WTC11 (cell line): ENCODE measurements at regions of chr10 and their contacts with region 1.

Region 1: DNA sequence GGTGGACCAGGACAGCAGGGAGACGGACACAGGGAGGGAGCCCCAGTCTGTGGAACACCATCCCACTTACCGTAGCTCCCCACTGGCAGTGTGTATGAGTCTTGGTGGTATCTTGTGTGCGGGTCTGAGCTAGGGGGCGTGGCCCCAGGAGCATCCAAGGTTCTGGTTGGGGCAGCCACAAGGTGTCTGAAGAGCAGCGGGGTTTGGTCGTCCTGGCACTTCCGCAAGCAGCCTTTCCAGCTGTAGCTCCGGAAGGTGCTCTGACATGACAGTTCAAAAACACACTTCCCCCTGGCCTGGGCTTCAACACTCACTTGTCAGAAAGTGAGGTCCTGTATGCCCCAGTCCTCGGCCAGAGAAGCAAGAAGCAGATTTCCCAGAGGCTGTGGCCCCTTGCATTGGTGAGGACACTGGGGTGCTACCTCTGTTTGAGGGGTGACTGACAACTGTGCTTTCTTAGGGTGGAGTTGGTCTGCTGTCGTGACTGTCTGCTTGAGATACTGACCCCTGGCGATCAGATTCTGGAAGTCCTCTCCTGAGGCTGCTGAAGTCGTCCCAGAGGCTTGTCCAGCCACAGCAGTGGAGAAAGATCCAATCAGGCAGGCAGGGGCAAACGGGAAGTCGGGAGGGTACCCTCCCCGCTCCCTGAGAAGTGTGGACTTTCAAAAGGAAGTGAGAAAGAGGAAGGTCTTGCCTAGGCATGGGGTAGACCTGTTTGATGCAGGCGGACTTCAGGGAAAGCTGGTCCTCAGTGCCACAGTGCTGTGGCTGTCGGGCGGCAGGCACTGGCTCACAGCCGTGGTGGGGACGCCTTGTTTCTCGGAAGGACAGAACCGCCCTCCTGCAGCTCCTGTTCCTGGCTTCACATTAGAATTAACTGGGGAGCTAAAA is 51.4 kb upstream of the PFKFB3 start:
- DNase-seq: peak; percentile 75
- ATAC-seq: peak; percentile 95
- H3K4me3 Mint-ChIP-seq: no peak overlapping the region
- H3K27ac Mint-ChIP-seq: 0 out of 2 replicates have a peak overlapping the region, but pooled peaks have one; percentile 81
- H3K4me1 Mint-ChIP-seq: peaks cover 33% of the 10 kb centered on the region
- H3K27me3 Mint-ChIP-seq: no peaks in the 10 kb centered on the region
- CTCF ChIP-seq: peak; percentile 31; the same call in 1 of the 2 replicates

Region 2: GRCh38 chr10:6108603-6109443 is 42.5 kb before region 1 on chr10:
- CTCF ChIA-PET with region 1: interaction called, 10 read pairs
- POLR2A ChIA-PET with region 1: no interaction called
- DNase-seq: peak; percentile 84
- ATAC-seq: peak; percentile 97
- H3K4me3 Mint-ChIP-seq: peak overlapping the region; percentile 43
- H3K27ac Mint-ChIP-seq: peak overlapping the region; percentile 97
- H3K4me1 Mint-ChIP-seq: peaks cover 43% of the 10 kb centered on the region
- H3K27me3 Mint-ChIP-seq: no peaks in the 10 kb centered on the region
- CTCF ChIP-seq: peak; percentile 70

Region 3: DNA sequence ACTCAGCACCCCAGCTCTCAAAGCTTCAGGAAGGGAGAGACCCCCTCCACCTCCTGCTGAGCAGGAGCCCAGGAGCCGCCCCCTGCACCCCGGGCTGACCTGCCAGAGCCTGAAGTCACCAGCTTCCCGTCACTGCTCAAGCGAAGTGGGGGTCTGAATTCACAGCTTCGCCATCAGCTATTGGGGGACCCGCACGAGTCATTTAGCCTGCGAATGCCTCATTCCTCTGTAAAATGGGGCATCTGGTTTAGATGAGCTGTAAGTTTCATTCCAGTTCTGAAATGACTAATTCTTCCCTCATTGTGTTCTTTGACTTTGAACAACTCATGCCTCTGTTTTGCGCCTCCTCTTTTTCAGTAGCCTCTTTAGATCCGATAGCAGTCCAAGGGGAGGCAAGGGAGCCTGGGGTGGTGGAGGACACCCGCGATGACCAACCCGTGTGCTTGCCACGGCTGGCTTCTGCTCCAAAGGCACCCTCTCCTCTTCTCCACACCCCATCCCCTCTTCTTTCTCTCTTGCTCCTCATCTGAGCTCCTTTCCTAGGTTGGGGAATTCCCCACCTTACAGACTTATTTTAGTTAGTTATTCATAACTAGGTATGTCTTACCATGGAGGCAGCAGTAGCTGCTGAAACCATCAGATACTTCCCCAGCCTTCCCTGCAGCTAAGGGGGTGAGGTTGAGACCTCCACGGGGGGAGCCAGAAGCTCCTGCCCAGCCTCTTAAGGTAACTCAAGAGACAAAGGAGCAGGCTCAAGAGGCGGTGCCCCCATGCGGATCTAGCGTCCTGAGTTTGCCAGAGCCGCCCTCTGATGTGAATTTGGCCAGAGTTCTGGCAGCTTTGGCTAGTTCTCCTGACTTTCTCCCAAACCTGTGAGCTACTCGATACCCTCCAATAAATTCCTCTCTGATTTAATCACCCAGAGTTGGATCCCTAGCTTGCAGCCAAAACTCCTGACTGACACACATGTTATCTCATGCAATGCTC is 14.8 kb before region 1 on chr10:
- CTCF ChIA-PET with region 1: interaction called, 14 read pairs
- POLR2A ChIA-PET with region 1: no interaction called
- DNase-seq: no peak
- ATAC-seq: no peak
- H3K4me3 Mint-ChIP-seq: no peak overlapping the region
- H3K27ac Mint-ChIP-seq: no peak overlapping the region
- H3K4me1 Mint-ChIP-seq: peaks cover 32% of the 10 kb centered on the region
- H3K27me3 Mint-ChIP-seq: peaks cover 9% of the 10 kb centered on the region
- CTCF ChIP-seq: no peak

Region 4: GRCh38 chr10:6163364-6164270 is 12.3 kb after region 1 on chr10:
- CTCF ChIA-PET with region 1: interaction called, 13 read pairs
- POLR2A ChIA-PET with region 1: no interaction called
- DNase-seq: peak; percentile 81
- ATAC-seq: peak; percentile 88
- H3K4me3 Mint-ChIP-seq: peak overlapping the region; percentile 78
- H3K27ac Mint-ChIP-seq: no peak overlapping the region; the same call in 1 of the 2 replicates
- H3K4me1 Mint-ChIP-seq: peaks cover 23% of the 10 kb centered on the region
- H3K27me3 Mint-ChIP-seq: peaks cover 6% of the 10 kb centered on the region
- CTCF ChIP-seq: no peak